HAP-1 (cell line): ENCODE measurements at regions of chr7 and their contacts with region 1.

Region 1: GRCh38 chr7:128381161-128381821 is 19.8 kb upstream of the PRRT4 start:
- DNase-seq: peak; percentile 31 to 82
- H3K4me3 ChIP-seq: no peak overlapping the region
- H3K4me1 ChIP-seq: no peaks in the 10 kb centered on the region
- H3K27me3 ChIP-seq: no peaks in the 10 kb centered on the region

Region 2: GRCh38 chr7:128347647-128348097 is 33.6 kb before region 1 on chr7:
- in situ Hi-C with region 1: loop called (anchors 5 kb)
- DNase-seq: peak; percentile 32 to 75
- H3K4me3 ChIP-seq: no peak overlapping the region
- H3K4me1 ChIP-seq: no peaks in the 10 kb centered on the region; the same call in 1 of the 2 replicates
- H3K27me3 ChIP-seq: no peaks in the 10 kb centered on the region